ENCODE measurements at regions of chr16 and their contacts with region 1.

Region 1: GRCh38 chr16:49617016-49617629 is 238.8 kb downstream of the ZNF423 start:
- DNase-seq: no peak
- ATAC-seq: no peak
- H3K4me3 ChIP-seq: no peak overlapping the region
- H3K27ac ChIP-seq: no peak overlapping the region
- H3K4me1 ChIP-seq: peaks cover 15% of the 10 kb centered on the region
- H3K27me3 ChIP-seq: no peaks in the 10 kb centered on the region
- CTCF ChIP-seq: no peak

Region 2: GRCh38 chr16:49260253-49260652 is 356.9 kb before region 1 on chr16:
- intact Hi-C with region 1: no loop called
- DNase-seq: no peak
- ATAC-seq: no peak
- H3K4me3 ChIP-seq: no peak overlapping the region
- H3K27ac ChIP-seq: no peak overlapping the region
- H3K4me1 ChIP-seq: no peaks in the 10 kb centered on the region
- H3K27me3 ChIP-seq: peaks cover 0 to 9% (median under 1%) of the 10 kb centered on the region in 3 donors
- CTCF ChIP-seq: no peak

Region 3: GRCh38 chr16:49639739-49640431 is 22.8 kb after region 1 on chr16:
- intact Hi-C with region 1: no loop called
- DNase-seq: peak; percentile 61 to 67
- ATAC-seq: peak; percentile 65 to 72 (median 69)
- H3K4me3 ChIP-seq: no peak overlapping the region
- H3K27ac ChIP-seq: peak overlapping the region; percentile 56
- H3K4me1 ChIP-seq: peaks cover 23% of the 10 kb centered on the region
- H3K27me3 ChIP-seq: no peaks in the 10 kb centered on the region
- CTCF ChIP-seq: no peak

Region 4: DNA sequence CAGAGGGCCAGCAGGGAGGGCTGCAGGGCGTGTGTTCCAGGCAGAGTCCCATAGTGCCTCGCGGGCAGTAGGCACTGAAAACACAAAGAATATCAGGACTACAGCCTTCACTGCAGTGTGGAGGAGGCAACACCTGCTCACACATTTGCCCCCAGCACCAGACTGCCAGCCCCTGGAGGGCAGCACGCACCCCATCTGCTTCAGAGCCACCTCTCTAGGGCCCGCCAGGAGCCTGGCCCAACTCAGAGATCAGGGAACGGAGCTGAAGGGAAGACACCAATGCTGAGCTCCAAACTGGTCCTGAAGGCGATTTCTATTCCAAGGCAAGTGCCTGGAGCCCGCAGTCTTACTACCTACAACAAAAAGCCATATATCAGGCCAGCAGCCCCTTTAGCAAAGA is 108.5 kb after region 1 on chr16:
- intact Hi-C with region 1: no loop called
- DNase-seq: no peak
- ATAC-seq: peak in 1 of 4 donors; percentile 24
- H3K4me3 ChIP-seq: no peak overlapping the region
- H3K27ac ChIP-seq: no peak overlapping the region
- H3K4me1 ChIP-seq: peaks cover 5% of the 10 kb centered on the region
- H3K27me3 ChIP-seq: no peaks in the 10 kb centered on the region
- CTCF ChIP-seq: no peak

Region 5: DNA sequence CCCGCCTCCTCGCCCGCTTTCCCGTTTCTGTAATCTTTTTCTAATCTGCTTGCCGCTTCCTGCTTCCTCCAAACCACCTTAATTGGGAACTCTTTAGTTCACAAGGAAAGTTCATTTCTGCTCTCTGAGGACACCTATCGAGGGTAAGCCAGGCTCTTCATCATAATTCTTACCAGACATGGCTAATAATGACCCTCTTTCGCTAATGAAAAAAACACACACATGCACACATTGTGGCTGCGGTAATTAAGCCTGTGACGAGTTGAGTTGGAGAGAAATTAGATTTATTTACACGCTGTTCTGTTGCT is 138.1 kb after region 1 on chr16:
- intact Hi-C with region 1: loop called in 1 of 2 experiments (anchors 10 kb)
- DNase-seq: no peak
- ATAC-seq: peak in 2 of 4 donors; percentile 51 to 70
- H3K4me3 ChIP-seq: peak overlapping the region; percentile 50
- H3K27ac ChIP-seq: peak overlapping the region; percentile 63
- H3K4me1 ChIP-seq: peaks cover 16% of the 10 kb centered on the region
- H3K27me3 ChIP-seq: no peaks in the 10 kb centered on the region
- CTCF ChIP-seq: peak; percentile 33

Region 6: DNA sequence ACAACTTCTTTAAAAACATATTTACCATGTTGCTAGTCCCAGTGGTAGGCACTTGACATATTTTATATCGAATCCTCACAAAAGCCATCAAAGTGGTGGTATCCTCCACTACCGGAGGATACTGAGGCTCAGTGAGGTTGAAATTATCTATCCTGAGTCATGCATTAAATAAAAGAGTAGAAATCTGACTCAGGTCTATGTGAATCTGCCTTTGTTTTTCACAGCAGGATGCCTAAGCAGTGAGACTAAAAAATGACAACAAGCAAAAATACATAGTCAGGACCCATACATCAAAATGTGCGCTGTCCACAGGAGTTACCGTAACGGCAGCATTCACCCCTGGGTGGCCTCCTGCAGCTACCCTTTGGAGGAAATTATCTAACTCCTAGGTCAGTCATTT is 734.0 kb after region 1 on chr16:
- intact Hi-C with region 1: no loop called
- DNase-seq: no peak
- ATAC-seq: no peak
- H3K4me3 ChIP-seq: no peak overlapping the region
- H3K27ac ChIP-seq: no peak overlapping the region
- H3K4me1 ChIP-seq: no peaks in the 10 kb centered on the region
- H3K27me3 ChIP-seq: no peaks in the 10 kb centered on the region
- CTCF ChIP-seq: no peak

Measured in psoas muscle (tissue), 8 donors.